Ascending aorta (tissue), 2 donors: ENCODE measurements at regions of chr5 and their contacts with region 1.

Region 1: GRCh38 chr5:134738133-134738962 is at the start of gene CAMLG:
- DNase-seq: peak; percentile 89 to 99
- H3K4me3 ChIP-seq: peak within 1 kb of the TSS; percentile 72 to 92
- H3K27ac ChIP-seq: peak within 1 kb of the TSS; percentile 95 to 97
- H3K4me1 ChIP-seq: peaks cover 0 to 9% of the 10 kb centered on the region in 2 donors
- H3K27me3 ChIP-seq: no peaks in the 10 kb centered on the region
- CTCF ChIP-seq: peak; percentile 31 to 52 (median 47)
- total RNA-seq, gene CAMLG: 12.6 TPM

Region 2: GRCh38 chr5:134225618-134226440 is 512.5 kb before region 1 on chr5 and contains the start of gene PPP2CA:
- intact Hi-C with region 1: loop called (anchors 5 kb)
- DNase-seq: peak; percentile 96 to 99
- H3K4me3 ChIP-seq: peak within 1 kb of the TSS; percentile 76 to 91
- H3K27ac ChIP-seq: peak within 1 kb of the TSS; percentile 100
- H3K4me1 ChIP-seq: peaks cover 7 to 38% of the 10 kb centered on the region in 2 donors
- H3K27me3 ChIP-seq: no peaks in the 10 kb centered on the region
- CTCF ChIP-seq: no peak
- total RNA-seq, gene PPP2CA: 26.2 TPM

Region 3: GRCh38 chr5:134758504-134759341 is 20.4 kb after region 1 on chr5 and contains the start of gene DDX46:
- intact Hi-C with region 1: loop called (anchors 1 kb)
- DNase-seq: peak; percentile 58 to 95
- H3K4me3 ChIP-seq: peak within 1 kb of the TSS; percentile 91 to 97
- H3K27ac ChIP-seq: peak within 1 kb of the TSS; percentile 74 to 82
- H3K4me1 ChIP-seq: peaks cover 3 to 7% of the 10 kb centered on the region in 2 donors
- H3K27me3 ChIP-seq: no peaks in the 10 kb centered on the region
- CTCF ChIP-seq: peak; percentile 59 to 88 (median 85)
- total RNA-seq, gene DDX46: 84.1 TPM

Region 4: GRCh38 chr5:134845852-134846640 is 107.7 kb after region 1 on chr5 and contains the start of gene C5orf24:
- intact Hi-C with region 1: loop called (anchors 5 kb)
- DNase-seq: peak; percentile 85 to 97
- H3K4me3 ChIP-seq: peak within 1 kb of the TSS; percentile 92 to 94
- H3K27ac ChIP-seq: peak within 1 kb of the TSS; percentile 95 to 97
- H3K4me1 ChIP-seq: peaks cover 4 to 30% of the 10 kb centered on the region in 2 donors
- H3K27me3 ChIP-seq: no peaks in the 10 kb centered on the region
- CTCF ChIP-seq: no peak
- total RNA-seq, gene C5orf24: 36.5 TPM

Region 5: DNA sequence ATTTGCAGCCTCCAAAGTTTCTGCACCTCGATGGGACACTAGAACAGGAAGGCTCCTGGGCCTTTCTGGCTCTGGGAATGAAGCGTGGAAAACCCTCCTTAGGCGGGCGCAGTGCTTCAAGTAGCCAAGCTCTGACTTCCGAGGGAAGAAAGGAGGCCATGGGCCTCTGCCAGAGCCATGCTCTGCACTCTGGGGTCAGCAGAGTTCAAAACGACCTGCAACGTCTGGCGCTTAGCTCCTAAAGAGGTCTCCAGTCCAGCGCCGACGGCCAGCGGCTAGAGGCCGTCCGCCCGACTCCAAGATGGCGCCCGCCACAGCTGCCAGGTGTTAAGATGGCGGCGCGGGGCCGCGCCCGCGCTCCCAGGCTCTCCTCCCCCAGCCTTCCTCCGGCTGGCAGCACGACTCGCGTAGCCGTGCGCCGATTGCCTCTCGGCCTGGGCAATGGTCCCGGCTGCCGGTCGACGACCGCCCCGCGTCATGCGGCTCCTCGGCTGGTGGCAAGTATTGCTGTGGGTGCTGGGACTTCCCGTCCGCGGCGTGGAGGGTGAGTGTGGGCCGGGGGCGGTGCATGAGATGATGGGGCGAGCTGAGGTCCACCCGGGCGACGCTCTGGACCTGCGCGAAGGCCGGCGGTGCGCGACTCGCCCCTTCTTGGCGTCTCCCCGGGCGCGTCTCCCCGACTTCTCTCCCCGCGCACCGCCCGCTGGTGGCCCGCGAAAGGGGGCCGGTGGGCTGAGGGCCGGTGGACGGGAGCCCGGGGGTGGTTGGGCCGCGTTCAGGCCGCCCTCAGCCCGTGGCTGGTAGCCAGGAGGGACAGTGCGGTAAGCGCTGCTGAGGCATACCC is 135.9 kb after region 1 on chr5 and contains the start of gene TXNDC15:
- intact Hi-C with region 1: loop called (anchors 10 kb)
- DNase-seq: peak; percentile 47 to 93
- H3K4me3 ChIP-seq: peak within 1 kb of the TSS; percentile 94 to 96
- H3K27ac ChIP-seq: peak within 1 kb of the TSS; percentile 96 to 97
- H3K4me1 ChIP-seq: peaks cover 0 to 9% of the 10 kb centered on the region in 2 donors
- H3K27me3 ChIP-seq: no peaks in the 10 kb centered on the region
- CTCF ChIP-seq: no peak
- total RNA-seq, gene TXNDC15: 211 TPM

Region 6: DNA sequence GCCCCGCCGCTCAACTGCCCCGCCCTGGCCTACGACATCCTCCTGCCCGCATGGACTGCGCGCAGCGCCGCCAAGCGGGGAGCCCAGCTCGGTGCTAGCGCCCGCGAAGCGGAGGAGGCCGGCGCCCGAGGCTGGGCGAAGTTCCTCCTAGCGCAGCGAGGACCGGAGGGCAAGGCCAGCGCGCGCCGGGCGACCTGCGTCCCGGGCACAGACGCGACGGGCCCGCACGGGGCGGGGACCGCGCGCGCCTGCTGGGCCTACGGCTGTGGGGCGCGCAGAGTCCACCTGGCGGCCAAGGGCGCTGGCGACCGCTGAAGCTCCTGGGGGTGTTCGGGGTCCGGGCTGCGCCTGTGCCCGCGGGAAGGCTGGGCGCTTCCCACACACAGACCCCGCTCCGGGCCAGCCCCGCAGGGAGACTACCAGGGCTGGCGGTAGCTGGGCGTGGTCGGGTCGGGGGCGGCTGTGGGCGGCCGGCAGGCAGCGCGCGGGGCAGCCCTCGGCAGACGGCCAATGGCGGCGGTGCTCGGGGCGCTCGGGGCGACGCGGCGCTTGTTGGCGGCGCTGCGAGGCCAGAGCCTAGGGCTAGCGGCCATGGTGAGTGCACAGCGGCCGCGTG is 166.4 kb after region 1 on chr5 and contains the start of gene PCBD2:
- intact Hi-C with region 1: loop called (anchors 2 kb)
- DNase-seq: peak; percentile 62 to 94
- H3K4me3 ChIP-seq: peak within 1 kb of the TSS; percentile 85 to 97
- H3K27ac ChIP-seq: peak within 1 kb of the TSS; percentile 96
- H3K4me1 ChIP-seq: no peaks in the 10 kb centered on the region
- H3K27me3 ChIP-seq: no peaks in the 10 kb centered on the region
- CTCF ChIP-seq: peak; percentile 84 to 97 (median 89)
- total RNA-seq, gene PCBD2: 7.6 TPM